CD14-positive monocyte (primary cell): ENCODE measurements at regions of chr13 and their contacts with region 1.

Region 1: GRCh38 chr13:95624020-95624419 is 20.5 kb downstream of the DZIP1 start:
- DNase-seq: peak; percentile 45 to 57 (median 45)
- H3K4me3 ChIP-seq: no peak overlapping the region
- H3K4me3 Mint-ChIP-seq: no peak overlapping the region
- H3K27ac ChIP-seq: no peak overlapping the region
- H3K27ac Mint-ChIP-seq: no peak overlapping the region
- H3K4me1 ChIP-seq: peaks cover 10 to 11% of the 10 kb centered on the region in 2 donors
- H3K4me1 Mint-ChIP-seq: peaks cover 14% of the 10 kb centered on the region
- H3K27me3 ChIP-seq: no peaks in the 10 kb centered on the region
- H3K27me3 Mint-ChIP-seq: peaks cover 0 to 2% (median 0%) of the 10 kb centered on the region in 3 donors
- CTCF ChIP-seq: peak; percentile 80

Region 2: DNA sequence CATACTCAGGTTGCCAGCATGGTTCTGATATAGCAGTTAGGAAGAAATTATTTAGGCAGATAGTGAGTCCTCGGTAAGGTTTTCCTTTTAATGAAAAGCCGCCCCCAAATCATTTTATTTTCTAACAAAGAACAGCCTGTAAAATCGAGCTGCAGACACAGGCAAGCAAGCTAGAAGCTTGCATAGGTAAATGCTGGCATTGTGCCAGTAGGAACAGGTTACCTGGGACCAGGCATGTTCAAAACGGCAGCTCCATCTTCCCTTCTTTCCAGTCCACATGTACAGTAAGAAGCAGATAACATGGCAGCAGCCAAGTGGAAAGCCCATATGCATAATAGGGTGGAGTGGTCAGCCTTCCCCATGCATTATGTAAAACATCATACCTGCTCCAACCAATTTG is 358.1 kb after region 1 on chr13:
- intact Hi-C with region 1: loop called in 1 of 2 experiments (anchors 5 kb)
- DNase-seq: no peak
- H3K4me3 ChIP-seq: no peak overlapping the region
- H3K4me3 Mint-ChIP-seq: no peak overlapping the region
- H3K27ac ChIP-seq: no peak overlapping the region
- H3K27ac Mint-ChIP-seq: peak overlapping the region in 2 of 7 donors; percentile 32 to 60
- H3K4me1 ChIP-seq: no peaks in the 10 kb centered on the region
- H3K4me1 Mint-ChIP-seq: no peaks in the 10 kb centered on the region
- H3K27me3 ChIP-seq: no peaks in the 10 kb centered on the region
- H3K27me3 Mint-ChIP-seq: no peaks in the 10 kb centered on the region
- CTCF ChIP-seq: no peak